Transverse colon (tissue), 4 donors: ENCODE measurements at regions of chr16 and their contacts with region 1.

Region 1: DNA sequence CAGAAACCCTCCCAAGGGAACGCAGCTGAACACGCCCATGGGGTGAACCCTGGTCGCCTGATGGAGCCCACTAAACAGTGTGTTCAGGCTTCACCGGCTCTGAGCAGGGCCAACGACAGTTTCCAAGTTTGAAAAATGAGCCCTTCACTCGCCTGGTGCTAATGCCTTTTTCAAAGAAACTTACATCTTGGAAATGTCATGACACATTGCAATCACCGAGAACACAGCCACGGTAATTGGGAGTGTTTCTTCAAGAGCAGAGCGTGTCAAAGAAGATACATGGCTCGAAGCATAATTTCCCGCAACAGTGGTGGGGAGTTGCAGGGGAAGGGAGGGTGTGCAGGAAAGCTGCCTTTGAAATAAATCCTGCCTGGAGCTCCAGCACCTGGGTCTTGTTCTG is 463.2 kb downstream of the TMEM114 start:
- DNase-seq: no peak
- H3K4me3 ChIP-seq: no peak overlapping the region
- H3K27ac ChIP-seq: no peak overlapping the region
- H3K4me1 ChIP-seq: no peaks in the 10 kb centered on the region
- H3K27me3 ChIP-seq: no peaks in the 10 kb centered on the region
- CTCF ChIP-seq: no peak
- EP300 ChIP-seq: no peak
- POLR2A ChIP-seq: no peak

Region 2: DNA sequence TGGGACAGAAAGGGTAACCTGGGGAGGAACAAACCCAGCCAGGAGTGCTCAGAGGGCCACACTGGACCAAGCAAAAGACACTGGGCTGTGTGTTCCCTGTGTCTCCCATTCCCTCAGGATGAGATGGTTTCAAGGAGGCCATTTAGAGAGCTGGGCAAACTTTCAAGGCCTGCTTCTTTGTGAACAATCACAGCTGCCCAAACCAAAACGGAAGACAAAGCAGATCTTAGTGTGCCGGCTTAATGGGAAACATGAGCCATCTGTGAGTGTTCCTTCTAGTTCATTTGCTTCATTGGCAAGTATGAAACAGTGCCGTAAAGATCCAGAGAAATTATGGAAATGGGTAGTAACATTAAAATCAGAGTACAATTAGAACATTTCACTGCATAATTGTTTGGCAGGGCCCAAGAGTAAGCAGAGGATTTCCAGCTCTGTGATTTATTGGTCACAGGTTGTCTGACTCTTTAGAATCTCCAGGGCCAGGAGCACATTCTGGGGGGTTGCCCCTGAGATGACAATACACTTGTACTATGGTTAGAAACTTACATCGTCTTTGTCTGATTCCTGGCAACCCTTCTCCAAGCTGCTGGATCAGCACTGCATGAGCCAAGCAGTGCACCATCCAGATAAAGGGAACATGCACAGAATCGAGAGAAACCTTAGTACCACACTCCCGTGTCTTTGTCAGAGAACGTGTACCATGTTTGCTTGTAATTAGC is 382.4 kb before region 1 on chr16:
- in situ Hi-C with region 1: no loop called
- intact Hi-C with region 1: loop called (anchors 10 kb)
- DNase-seq: no peak
- H3K4me3 ChIP-seq: no peak overlapping the region
- H3K27ac ChIP-seq: peak overlapping the region in 2 of 4 donors; percentile 7 to 28
- H3K4me1 ChIP-seq: no peaks in the 10 kb centered on the region
- H3K27me3 ChIP-seq: no peaks in the 10 kb centered on the region
- CTCF ChIP-seq: no peak
- EP300 ChIP-seq: no peak
- POLR2A ChIP-seq: no peak

Region 3: GRCh38 chr16:7957151-7957550 is 169.9 kb before region 1 on chr16:
- in situ Hi-C with region 1: no loop called
- intact Hi-C with region 1: no loop called
- DNase-seq: no peak
- H3K4me3 ChIP-seq: no peak overlapping the region
- H3K27ac ChIP-seq: no peak overlapping the region
- H3K4me1 ChIP-seq: no peaks in the 10 kb centered on the region
- H3K27me3 ChIP-seq: no peaks in the 10 kb centered on the region
- CTCF ChIP-seq: no peak
- EP300 ChIP-seq: no peak
- POLR2A ChIP-seq: no peak

Region 4: DNA sequence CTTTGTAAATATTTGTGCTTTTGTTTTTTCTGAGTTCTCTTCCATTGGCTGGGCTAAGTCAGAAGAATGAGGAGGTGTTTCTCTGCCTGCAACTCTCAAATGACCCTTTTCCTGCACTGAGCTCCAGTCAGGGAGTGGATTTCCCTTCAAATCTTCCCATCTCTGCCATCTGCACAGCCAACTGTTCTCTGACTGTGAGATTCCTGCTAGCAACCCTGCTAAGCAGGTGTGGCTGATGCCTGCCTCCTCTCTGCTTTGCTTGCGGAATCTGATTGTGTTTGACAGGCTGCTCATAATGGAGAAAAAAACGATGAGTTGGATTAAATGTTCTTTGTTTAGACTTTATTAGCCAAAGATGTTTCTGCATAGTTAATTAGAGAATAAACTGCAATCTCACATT is 56.6 kb before region 1 on chr16:
- in situ Hi-C with region 1: no loop called
- intact Hi-C with region 1: no loop called
- DNase-seq: no peak
- H3K4me3 ChIP-seq: no peak overlapping the region
- H3K27ac ChIP-seq: no peak overlapping the region
- H3K4me1 ChIP-seq: no peaks in the 10 kb centered on the region
- H3K27me3 ChIP-seq: no peaks in the 10 kb centered on the region
- CTCF ChIP-seq: no peak
- EP300 ChIP-seq: no peak
- POLR2A ChIP-seq: no peak

Region 5: DNA sequence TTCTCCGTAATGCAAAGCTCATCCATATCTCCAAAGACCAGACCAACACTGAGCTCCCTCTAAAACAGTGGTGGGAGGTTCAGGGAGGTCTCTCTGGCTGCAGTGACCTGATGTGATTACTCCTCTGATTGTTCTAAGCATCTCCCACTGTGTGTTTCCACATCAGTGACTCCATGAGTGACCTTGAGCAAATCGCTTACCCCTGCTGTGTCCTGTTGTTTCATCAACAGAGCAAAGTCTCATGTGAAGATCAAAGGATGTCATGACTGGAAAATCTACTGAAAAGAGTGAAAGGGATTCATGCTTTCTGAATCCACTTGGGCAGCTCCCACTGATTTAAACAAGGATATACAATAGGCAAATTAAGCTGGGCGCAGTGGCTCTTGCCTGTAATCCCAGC is 110.4 kb after region 1 on chr16:
- in situ Hi-C with region 1: no loop called
- intact Hi-C with region 1: no loop called
- DNase-seq: no peak
- H3K4me3 ChIP-seq: no peak overlapping the region
- H3K27ac ChIP-seq: no peak overlapping the region
- H3K4me1 ChIP-seq: peaks cover 0 to 5% (median 2%) of the 10 kb centered on the region in 4 donors
- H3K27me3 ChIP-seq: no peaks in the 10 kb centered on the region
- CTCF ChIP-seq: no peak
- EP300 ChIP-seq: no peak
- POLR2A ChIP-seq: no peak